Caco-2 (cell line): ENCODE measurements at regions of chr20 and their contacts with region 1.

Region 1: GRCh38 chr20:22924949-22925612 is 110.0 kb upstream of the SSTR4 start:
- DNase-seq: no peak
- H3K4me3 ChIP-seq: no peak overlapping the region
- H3K4me3 Mint-ChIP-seq: no peak overlapping the region
- H3K27ac Mint-ChIP-seq: no peak overlapping the region
- H3K4me1 ChIP-seq: no peaks in the 10 kb centered on the region
- H3K4me1 Mint-ChIP-seq: peaks cover 5% of the 10 kb centered on the region
- H3K27me3 ChIP-seq: no peaks in the 10 kb centered on the region
- H3K27me3 Mint-ChIP-seq: no peaks in the 10 kb centered on the region
- CTCF ChIP-seq: no peak

Region 2: DNA sequence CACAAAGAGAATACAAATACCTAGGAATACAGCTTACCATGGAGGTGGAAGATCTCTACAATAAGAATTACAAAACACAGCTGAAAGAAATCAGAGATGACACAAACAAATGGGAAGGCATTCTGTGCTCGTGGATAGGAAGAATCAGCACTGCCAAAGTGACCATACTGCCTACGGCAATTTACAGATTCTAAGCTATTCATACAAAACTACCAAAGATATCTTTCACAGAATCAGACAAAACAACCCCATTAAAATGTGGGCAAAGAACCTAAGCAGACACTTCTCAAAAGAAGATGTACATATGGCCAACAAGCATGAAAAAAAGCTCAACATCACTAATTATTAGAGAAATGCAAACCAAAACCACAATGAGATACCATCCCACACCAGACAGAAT is 23.2 kb before region 1 on chr20:
- CTCF ChIA-PET with region 1: no interaction called
- POLR2A ChIA-PET with region 1: no interaction called
- intact Hi-C with region 1: no loop called
- DNase-seq: no peak
- H3K4me3 ChIP-seq: no peak overlapping the region
- H3K4me3 Mint-ChIP-seq: no peak overlapping the region
- H3K27ac Mint-ChIP-seq: no peak overlapping the region
- H3K4me1 ChIP-seq: no peaks in the 10 kb centered on the region
- H3K4me1 Mint-ChIP-seq: no peaks in the 10 kb centered on the region
- H3K27me3 ChIP-seq: no peaks in the 10 kb centered on the region
- H3K27me3 Mint-ChIP-seq: no peaks in the 10 kb centered on the region
- CTCF ChIP-seq: no peak

Region 3: GRCh38 chr20:23061734-23062561 is 136.9 kb after region 1 on chr20:
- CTCF ChIA-PET with region 1: no interaction called
- POLR2A ChIA-PET with region 1: no interaction called
- intact Hi-C with region 1: no loop called
- DNase-seq: peak; percentile 49 to 53
- H3K4me3 ChIP-seq: no peak overlapping the region
- H3K4me3 Mint-ChIP-seq: no peak overlapping the region
- H3K27ac Mint-ChIP-seq: peak overlapping the region; percentile 39
- H3K4me1 ChIP-seq: peaks cover 58% of the 10 kb centered on the region
- H3K4me1 Mint-ChIP-seq: peaks cover 40% of the 10 kb centered on the region
- H3K27me3 ChIP-seq: no peaks in the 10 kb centered on the region
- H3K27me3 Mint-ChIP-seq: no peaks in the 10 kb centered on the region
- CTCF ChIP-seq: peak; percentile 35 to 39

Region 4: GRCh38 chr20:23091721-23092383 is 166.8 kb after region 1 on chr20:
- CTCF ChIA-PET with region 1: no interaction called
- POLR2A ChIA-PET with region 1: interaction called, 13 read pairs
- intact Hi-C with region 1: no loop called
- DNase-seq: no peak
- H3K4me3 ChIP-seq: no peak overlapping the region
- H3K4me3 Mint-ChIP-seq: no peak overlapping the region
- H3K27ac Mint-ChIP-seq: no peak overlapping the region
- H3K4me1 ChIP-seq: no peaks in the 10 kb centered on the region
- H3K4me1 Mint-ChIP-seq: no peaks in the 10 kb centered on the region
- H3K27me3 ChIP-seq: no peaks in the 10 kb centered on the region
- H3K27me3 Mint-ChIP-seq: no peaks in the 10 kb centered on the region
- CTCF ChIP-seq: no peak

Region 5: GRCh38 chr20:23492292-23492691 is 567.2 kb after region 1 on chr20:
- CTCF ChIA-PET with region 1: no interaction called
- POLR2A ChIA-PET with region 1: interaction called, 11 read pairs
- intact Hi-C with region 1: no loop called
- DNase-seq: no peak
- H3K4me3 ChIP-seq: no peak overlapping the region
- H3K4me3 Mint-ChIP-seq: no peak overlapping the region
- H3K27ac Mint-ChIP-seq: no peak overlapping the region
- H3K4me1 ChIP-seq: no peaks in the 10 kb centered on the region
- H3K4me1 Mint-ChIP-seq: no peaks in the 10 kb centered on the region
- H3K27me3 ChIP-seq: 0 out of 2 replicates have a peak, but pooled peaks cover 1% of the 10 kb centered on the region
- H3K27me3 Mint-ChIP-seq: no peaks in the 10 kb centered on the region
- CTCF ChIP-seq: no peak